GM10248 (cell line): ENCODE measurements at regions of chr17 and their contacts with region 1.

Region 1: GRCh38 chr17:44218344-44219107 is 949 bp downstream of the UBTF start:
- DNase-seq: peak; percentile 92
- CTCF ChIP-seq: peak; percentile 70

Region 2: DNA sequence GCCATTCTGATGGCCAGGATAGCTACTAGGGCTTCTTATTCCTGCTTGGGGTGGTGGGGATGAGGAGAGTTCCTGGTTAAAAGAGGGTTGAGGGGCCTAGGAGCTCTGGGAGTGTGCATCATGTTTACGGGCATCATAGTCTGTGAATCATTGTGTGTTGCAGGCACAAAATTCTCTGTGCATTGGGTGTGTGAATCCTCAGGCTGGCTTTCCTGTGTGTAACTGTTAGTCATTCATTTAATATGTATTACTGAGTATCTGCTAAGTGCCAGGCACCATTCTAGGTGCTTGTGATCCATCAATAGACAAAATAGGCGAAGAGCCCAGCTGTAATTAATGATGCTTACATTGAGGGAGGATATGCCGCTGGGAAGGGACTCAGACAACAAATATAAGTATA is 282.1 kb before region 1 on chr17:
- CTCF ChIA-PET with region 1: no interaction called
- POLR2A ChIA-PET with region 1: no interaction called
- DNase-seq: no peak
- CTCF ChIP-seq: no peak

Region 3: DNA sequence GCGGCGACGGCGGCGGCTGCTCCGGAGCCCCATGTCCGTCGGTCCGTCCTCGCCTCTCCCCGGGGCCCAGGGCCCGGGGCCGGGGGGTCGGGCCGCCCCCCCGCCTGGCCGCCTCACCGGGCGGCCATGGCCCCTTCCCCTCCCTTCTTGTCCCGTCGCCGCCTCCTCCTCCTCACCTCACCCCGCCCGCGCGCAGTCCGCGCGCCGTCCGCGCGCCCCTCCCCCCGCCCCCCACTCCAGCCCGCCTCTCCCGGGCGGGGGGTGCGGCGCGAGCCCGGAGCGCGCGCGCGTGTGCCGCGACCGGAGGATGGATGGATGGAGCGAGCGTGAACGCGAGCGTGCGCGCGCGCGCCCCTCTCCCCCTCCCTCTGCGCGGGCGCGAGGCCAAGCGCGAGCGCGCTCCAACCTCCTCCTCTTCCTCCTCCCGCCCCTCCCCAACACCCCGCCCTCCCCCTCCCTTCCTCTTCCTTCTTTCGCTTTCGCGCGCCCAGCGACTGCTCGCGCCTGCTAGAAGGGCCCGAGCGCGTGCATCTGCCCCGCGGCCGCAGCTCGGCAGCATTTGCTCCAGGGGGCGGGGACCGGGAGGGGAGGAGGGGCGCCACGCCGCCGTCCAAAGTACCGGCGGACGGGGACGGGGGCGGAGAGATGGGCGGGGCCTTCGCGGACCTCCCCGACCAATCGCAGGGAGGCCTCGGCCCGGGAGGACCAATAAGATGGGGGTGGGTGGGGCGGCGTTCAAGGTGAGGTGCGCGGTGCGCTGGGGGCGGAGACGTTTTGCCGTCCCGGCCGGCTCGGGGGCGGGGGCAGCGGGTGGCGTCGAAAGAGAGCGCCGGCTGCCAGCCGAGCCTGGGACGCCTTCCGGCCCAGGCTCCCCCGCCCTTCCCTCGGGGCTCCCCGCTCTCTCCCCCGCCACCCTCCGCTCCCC is 18.7 kb before region 1 on chr17 and contains the start of gene ATXN7L3:
- CTCF ChIA-PET with region 1: interaction called, 42 read pairs
- POLR2A ChIA-PET with region 1: interaction called, 7 read pairs
- DNase-seq: peak; percentile 99
- CTCF ChIP-seq: no peak

Region 4: DNA sequence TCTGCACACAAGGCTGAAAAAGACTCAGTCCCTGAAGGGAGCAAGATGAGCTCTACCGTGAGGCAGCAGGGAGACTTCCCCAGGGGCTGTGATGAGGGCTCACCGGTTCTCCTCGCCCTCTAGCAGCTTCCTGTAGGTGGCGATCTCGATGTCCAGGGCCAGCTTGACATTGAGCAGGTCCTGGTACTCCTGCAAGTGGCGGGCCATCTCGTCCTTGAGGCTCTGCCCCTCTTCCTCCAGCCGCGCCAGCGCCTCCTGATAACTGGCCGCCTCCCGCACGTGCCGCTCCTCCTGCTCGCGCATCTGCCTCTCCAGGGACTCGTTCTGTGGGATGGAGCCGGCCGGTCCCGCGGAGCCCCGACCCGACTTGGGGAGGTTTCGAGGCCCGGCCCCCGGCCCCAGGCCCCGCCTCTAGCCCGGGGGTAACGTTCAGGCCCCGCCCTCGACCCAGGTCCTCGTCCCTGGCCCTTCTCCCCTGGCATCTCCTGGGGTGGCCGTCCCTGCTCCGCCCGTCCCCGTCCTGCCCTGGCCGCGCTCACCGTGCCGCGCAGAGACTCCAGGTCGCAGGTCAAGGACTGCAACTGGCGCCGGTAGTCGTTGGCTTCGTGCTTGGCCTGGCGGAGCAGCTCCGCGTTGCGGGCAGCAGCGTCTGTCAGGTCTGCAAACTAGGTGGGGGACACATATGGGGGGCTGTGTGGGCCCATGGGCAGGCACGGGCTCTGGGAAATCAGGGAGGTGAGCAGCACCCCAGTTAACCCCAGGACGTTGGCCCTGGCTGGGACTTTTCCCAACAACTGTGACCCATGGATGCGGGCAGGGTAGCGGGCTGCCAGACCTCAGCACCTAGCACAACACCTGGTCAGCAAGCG is 692.8 kb after region 1 on chr17:
- CTCF ChIA-PET with region 1: no interaction called
- POLR2A ChIA-PET with region 1: no interaction called
- DNase-seq: peak; percentile 64
- CTCF ChIP-seq: peak; percentile 70